ENCODE measurements at regions of chr4 and their contacts with region 1.

Region 1: DNA sequence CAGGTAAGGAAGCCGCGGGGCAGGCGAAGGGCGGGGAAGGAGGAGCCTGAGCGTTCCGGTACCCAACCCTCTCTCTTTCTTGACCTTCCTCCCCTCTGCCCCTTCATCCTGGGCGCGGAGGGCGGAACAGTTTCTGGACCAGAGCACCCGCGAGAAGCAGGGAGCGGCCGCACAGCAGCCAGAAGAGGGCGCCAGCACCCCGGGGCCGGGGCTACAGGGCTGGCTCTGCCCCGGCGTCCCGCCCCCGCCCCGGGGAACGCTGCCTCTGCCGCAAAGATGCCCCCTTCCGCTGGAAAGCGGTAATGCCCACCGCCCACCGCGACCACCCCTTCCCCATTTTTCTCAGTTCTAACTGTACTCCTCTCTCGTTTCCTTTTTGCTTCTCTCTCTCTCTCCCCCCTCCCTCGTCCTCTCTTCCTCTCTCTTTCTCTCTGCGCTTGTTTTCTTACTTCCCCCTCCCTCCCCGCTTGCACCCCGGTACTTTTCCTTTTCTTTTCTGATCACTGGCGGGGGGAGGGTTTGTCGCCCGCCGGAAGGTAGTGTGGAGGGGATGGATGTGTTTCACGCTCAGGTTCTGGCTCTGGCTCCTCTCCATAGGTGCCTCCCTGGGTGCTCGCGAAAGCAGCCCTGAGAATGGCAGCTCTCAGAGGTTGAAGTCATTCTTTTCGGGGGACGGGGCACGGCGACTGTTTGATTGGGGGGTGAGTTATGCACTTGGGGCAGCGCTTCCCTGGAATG is 13.1 kb upstream of the PRDM8 start:
- DNase-seq: peak; percentile 91
- H3K4me3 ChIP-seq: peak overlapping the region; percentile 39
- H3K27ac ChIP-seq: peak overlapping the region; percentile 40
- H3K4me1 ChIP-seq: no peaks in the 10 kb centered on the region
- H3K27me3 ChIP-seq: peaks cover 29% of the 10 kb centered on the region
- CTCF ChIP-seq: peak; percentile 85

Region 2: DNA sequence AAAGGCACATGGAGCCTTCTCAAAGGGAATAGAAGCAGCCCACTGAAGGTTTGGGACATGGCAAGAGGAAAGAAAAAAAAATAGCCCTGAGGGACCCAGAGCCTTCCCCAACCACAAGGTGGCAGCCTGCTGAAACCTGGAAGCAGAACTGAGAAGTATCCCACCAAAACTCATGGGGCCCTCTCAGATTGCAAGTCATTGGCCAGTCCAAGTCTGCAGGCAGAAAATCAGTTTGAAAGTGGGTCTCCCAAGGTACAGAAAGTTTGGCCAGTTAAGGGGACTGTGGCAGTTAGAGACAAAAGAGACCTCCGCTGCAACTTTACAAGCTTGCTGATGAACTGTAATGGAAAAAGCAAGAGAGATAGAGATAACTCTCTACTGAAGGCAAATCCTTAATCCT is 267.0 kb before region 1 on chr4:
- intact Hi-C with region 1: loop called (anchors 10 kb)
- DNase-seq: peak; percentile 43
- H3K4me3 ChIP-seq: no peak overlapping the region
- H3K27ac ChIP-seq: no peak overlapping the region
- H3K4me1 ChIP-seq: no peaks in the 10 kb centered on the region
- H3K27me3 ChIP-seq: no peaks in the 10 kb centered on the region
- CTCF ChIP-seq: peak; percentile 39

Region 3: DNA sequence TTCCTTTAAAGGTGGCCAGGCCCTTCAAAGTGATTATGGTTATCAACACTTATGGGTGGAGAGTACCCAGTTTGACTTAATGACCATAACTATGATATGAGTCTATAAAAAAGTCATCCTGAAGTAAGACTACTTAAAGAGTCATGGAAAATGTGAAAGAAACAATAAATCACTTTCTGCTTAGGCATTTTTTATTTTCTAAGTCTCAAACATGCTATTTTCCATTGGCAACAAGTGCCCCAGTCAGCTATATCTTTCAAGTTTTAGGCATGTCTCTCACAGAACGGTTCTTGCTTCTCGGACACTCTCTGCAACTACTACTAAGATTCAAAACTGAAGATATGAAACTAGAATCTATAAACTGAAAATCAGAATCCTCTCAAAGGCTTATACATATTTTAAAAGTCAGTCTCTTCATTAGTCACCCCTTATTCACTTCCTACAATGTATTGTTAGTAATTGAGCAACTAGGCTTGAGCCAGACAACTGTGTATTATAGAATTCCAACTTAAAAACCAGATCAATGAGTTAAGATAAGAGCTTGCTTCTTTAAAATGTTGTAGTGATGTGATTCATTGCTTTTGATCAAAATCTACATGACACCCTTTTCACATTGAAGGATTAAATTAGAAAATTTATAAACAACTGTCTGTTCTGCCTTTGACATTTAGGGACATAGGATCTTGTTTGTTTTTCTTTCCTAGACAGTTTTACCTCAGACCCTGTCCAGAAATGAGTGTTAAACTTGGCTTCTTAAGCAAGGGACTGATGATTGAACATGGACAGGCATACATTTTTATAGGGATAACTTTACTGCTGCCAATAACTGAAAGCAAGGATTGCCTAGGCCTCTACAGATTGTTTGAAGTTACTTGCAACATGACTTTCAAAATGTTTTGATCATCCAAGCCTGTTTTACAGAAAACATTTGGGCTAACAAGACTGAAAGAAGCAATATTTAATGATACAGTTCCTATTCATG is 114.1 kb before region 1 on chr4:
- intact Hi-C with region 1: loop called (anchors 10 kb)
- DNase-seq: no peak
- H3K4me3 ChIP-seq: peak overlapping the region; percentile 87
- H3K27ac ChIP-seq: peak overlapping the region; percentile 98
- H3K4me1 ChIP-seq: no peaks in the 10 kb centered on the region
- H3K27me3 ChIP-seq: no peaks in the 10 kb centered on the region
- CTCF ChIP-seq: no peak

Region 4: DNA sequence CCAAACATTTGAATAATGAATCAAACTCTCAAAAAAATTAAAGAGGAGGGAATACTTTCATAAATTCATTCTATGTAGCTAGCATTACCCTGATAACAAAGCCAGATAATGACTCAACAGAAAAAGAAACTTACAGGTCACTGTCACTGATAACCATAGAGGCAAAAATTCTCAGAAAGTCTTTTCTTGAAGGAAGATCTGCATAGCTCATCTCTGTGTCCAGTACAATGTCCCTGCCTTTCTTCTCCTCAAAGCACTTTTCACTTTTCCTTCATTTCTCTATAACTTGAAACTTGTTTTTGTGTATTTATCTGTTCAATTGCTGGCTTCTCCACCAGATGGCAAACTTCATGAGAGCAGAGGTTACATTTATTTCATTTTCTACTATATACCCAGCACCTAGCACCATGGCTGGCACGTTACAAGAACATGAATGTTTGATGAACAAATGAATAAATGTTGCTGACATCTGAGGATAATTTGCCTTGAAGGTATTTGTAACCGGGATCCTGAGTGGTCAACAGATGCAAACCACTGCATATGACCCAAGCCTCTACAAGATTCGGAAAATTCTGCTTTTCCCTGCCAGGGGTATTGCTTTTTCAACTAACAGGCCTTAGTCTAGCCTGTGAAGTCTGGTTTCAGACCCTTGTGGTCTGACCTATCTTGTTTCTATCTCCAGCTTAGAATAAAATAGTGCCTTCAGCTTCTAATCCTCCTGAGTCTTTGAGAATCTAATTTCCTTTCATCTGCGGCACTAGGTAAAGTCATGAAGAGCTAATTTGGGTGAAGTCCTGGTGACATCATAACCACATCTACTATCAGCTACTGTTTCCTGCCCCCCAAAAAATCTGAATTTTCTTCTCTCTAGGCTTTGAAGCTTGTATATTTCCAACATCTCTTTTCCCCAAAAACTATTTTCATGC is 58.7 kb before region 1 on chr4:
- intact Hi-C with region 1: loop called (anchors 5 kb)
- DNase-seq: no peak
- H3K4me3 ChIP-seq: no peak overlapping the region
- H3K27ac ChIP-seq: no peak overlapping the region
- H3K4me1 ChIP-seq: no peaks in the 10 kb centered on the region
- H3K27me3 ChIP-seq: no peaks in the 10 kb centered on the region
- CTCF ChIP-seq: peak; percentile 59

Measured in colonic mucosa (tissue), 4 donors.